ENCODE measurements at regions of chr2 and their contacts with region 1.

Region 1: GRCh38 chr2:1561811-1562421 is 148.7 kb downstream of the TPO start:
- DNase-seq: no peak
- CTCF ChIP-seq: no peak

Region 2: GRCh38 chr2:1550658-1551316 is 11.1 kb before region 1 on chr2:
- CTCF ChIA-PET with region 1: interaction called, 19 read pairs
- POLR2A ChIA-PET with region 1: no interaction called
- DNase-seq: peak; percentile 82
- CTCF ChIP-seq: peak; percentile 94